Colonic mucosa (tissue), 4 donors: ENCODE measurements at regions of chr12 and their contacts with region 1.

Region 1: DNA sequence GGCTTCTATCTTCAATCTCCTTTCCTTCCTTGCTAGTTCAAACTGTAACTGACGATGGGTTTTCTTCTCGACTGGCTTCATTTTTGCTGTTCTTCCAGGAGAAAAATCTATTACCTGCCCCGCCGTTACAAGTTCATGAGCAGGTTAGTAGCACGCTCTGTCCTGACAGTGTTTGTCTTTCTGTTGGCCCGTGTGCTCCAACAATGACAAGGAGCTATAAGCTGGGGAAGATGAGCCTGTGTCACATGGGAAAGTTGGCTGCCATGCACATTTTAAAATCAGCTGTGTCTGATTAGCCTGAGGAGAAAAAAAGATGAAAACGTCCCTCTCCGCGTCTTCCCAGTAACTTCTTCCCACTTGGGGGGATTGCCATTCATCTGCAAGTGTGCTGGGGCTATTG is 180.2 kb downstream of the ANO4 start:
- DNase-seq: no peak
- H3K4me3 ChIP-seq: no peak overlapping the region
- H3K27ac ChIP-seq: no peak overlapping the region
- H3K4me1 ChIP-seq: no peaks in the 10 kb centered on the region
- H3K27me3 ChIP-seq: no peaks in the 10 kb centered on the region
- CTCF ChIP-seq: no peak

Region 2: GRCh38 chr12:100573292-100574186 is 401.2 kb before region 1 on chr12 and contains the start of gene GAS2L3:
- intact Hi-C with region 1: no loop called
- DNase-seq: peak; percentile 92
- H3K4me3 ChIP-seq: peak within 1 kb of the TSS; percentile 55
- H3K27ac ChIP-seq: peak within 1 kb of the TSS; percentile 79
- H3K4me1 ChIP-seq: no peaks in the 10 kb centered on the region
- H3K27me3 ChIP-seq: no peaks in the 10 kb centered on the region
- CTCF ChIP-seq: no peak
- total RNA-seq, gene GAS2L3: 23.5 to 56.0 TPM

Region 3: GRCh38 chr12:101082706-101083105 is 108.0 kb after region 1 on chr12:
- intact Hi-C with region 1: loop called (anchors 5 kb)
- DNase-seq: no peak
- H3K4me3 ChIP-seq: no peak overlapping the region
- H3K27ac ChIP-seq: no peak overlapping the region
- H3K4me1 ChIP-seq: no peaks in the 10 kb centered on the region
- H3K27me3 ChIP-seq: no peaks in the 10 kb centered on the region
- CTCF ChIP-seq: no peak